ENCODE measurements at regions of chr19 and their contacts with region 1.

Region 1: GRCh38 chr19:3163230-3163886 is 15.2 kb upstream of the S1PR4 start:
- DNase-seq: peak; percentile 53 to 64
- H3K4me3 ChIP-seq: no peak overlapping the region
- H3K27ac ChIP-seq: no peak overlapping the region
- H3K4me1 ChIP-seq: peaks cover 7 to 19% of the 10 kb centered on the region in 2 donors
- H3K27me3 ChIP-seq: no peaks in the 10 kb centered on the region
- CTCF ChIP-seq: peak; percentile 77 to 97 (median 86)
- POLR2A ChIP-seq: no peak

Region 2: DNA sequence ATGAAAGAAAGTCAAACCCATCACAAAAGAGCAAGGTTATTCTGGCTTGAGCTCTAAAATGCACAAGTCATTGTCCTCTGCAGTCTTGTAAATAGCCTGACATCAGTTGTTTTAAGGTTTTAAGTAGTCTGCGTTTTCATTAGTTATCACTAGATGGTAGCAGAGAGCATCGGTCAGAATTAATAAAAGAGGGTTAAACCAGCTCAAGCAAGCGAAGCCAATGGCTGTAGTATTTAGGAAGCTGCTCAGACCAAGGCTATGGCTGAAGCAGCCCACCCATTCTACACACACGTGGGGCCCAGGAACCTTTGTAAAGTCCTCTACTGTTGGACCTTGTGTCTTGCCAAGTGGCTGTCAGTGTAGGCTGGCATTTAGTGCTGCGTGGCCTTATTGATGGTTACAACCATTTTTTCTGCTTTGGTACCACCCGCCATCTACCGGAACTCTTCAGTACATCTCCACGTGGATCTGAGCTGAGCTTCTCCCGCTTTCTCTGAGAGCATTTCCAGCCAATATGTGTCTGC is 275.9 kb before region 1 on chr19:
- intact Hi-C with region 1: loop called (anchors 5 kb)
- DNase-seq: no peak
- H3K4me3 ChIP-seq: no peak overlapping the region
- H3K27ac ChIP-seq: no peak overlapping the region
- H3K4me1 ChIP-seq: no peaks in the 10 kb centered on the region
- H3K27me3 ChIP-seq: no peaks in the 10 kb centered on the region
- CTCF ChIP-seq: peak; percentile 26 to 70 (median 57)
- POLR2A ChIP-seq: no peak

Region 3: DNA sequence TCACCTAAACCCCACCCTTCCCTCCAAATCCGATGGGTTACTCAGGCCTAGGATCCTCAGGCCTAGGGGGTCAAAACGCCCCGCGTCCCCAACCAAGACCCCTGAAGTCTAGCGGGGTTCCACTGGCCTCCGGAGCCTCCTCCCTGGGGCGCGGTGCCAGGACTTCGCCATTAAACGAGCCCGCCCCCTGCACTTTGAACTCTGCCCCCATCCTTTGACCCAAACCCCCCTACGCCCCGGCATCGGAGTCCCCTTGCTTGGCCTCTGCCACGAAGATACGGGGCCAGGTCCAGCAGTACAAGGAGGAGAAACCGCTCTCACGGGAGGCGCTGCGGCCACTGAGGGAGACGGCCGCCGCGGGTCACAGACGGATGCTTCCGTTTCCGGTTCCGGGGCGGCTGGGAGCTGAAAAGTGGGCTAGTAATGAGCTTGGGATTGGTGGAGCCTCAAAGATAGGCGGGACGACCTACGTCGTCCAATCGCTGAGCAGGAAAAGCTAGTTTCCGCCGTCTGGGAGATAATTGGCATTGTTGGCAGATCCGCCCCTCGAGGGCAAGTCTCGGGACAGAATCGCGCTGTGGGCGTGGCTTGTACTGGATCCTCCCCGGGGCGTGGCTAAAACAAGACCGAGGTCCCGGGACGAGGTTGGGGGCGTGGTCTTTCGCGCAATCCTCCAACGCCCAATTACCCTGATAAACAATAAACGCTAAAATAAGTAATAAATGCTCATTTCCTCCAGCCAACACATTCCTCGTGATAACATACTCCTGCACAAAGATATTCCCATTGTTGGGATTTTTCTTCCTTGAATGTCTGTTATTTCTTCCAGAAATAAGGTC is 212.9 kb before region 1 on chr19:
- intact Hi-C with region 1: loop called (anchors 10 kb)
- DNase-seq: peak; percentile 100
- H3K4me3 ChIP-seq: peak overlapping the region; percentile 19 to 68 (median 62)
- H3K27ac ChIP-seq: peak overlapping the region; percentile 83 to 98 (median 94)
- H3K4me1 ChIP-seq: peaks cover 22 to 35% of the 10 kb centered on the region in 2 donors
- H3K27me3 ChIP-seq: no peaks in the 10 kb centered on the region
- CTCF ChIP-seq: no peak
- POLR2A ChIP-seq: peak; percentile 66 to 88

Region 4: GRCh38 chr19:3020321-3020960 is 142.9 kb before region 1 on chr19:
- intact Hi-C with region 1: no loop called
- DNase-seq: no peak
- H3K4me3 ChIP-seq: no peak overlapping the region
- H3K27ac ChIP-seq: no peak overlapping the region
- H3K4me1 ChIP-seq: no peaks in the 10 kb centered on the region
- H3K27me3 ChIP-seq: no peaks in the 10 kb centered on the region
- CTCF ChIP-seq: no peak
- POLR2A ChIP-seq: no peak

Region 5: DNA sequence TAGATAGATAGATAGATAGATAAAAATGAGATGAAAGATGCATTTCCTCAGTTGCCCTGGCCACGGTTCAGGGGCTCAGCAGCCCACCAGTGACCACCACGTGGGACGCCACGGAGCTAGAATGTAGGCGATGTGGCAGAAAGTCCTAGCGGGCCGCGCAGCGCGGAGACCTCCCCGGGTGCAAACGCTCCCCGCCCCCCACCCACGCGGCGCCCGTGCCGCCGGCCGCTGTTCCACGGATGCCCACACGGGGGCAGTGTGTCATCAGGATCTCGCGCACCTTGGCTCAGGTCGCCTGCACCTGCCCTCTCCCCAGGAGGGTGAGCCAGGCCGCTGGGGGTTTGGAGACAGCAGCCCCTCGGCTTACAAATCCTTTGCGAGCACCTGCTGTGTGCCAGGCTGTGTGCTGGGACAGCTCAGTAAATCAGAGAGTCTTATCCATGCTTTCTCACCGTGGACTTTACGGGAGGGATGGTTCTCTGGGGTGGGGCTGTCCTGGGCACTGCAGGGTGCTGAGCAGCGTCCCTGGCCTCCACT is 87.4 kb before region 1 on chr19:
- intact Hi-C with region 1: loop called (anchors 10 kb)
- DNase-seq: peak; percentile 59 to 66
- H3K4me3 ChIP-seq: no peak overlapping the region
- H3K27ac ChIP-seq: peak overlapping the region in 1 of 3 donors; percentile 34
- H3K4me1 ChIP-seq: peaks cover 11 to 30% of the 10 kb centered on the region in 2 donors
- H3K27me3 ChIP-seq: no peaks in the 10 kb centered on the region
- CTCF ChIP-seq: peak; percentile 73 to 97 (median 92)
- POLR2A ChIP-seq: no peak

Region 6: DNA sequence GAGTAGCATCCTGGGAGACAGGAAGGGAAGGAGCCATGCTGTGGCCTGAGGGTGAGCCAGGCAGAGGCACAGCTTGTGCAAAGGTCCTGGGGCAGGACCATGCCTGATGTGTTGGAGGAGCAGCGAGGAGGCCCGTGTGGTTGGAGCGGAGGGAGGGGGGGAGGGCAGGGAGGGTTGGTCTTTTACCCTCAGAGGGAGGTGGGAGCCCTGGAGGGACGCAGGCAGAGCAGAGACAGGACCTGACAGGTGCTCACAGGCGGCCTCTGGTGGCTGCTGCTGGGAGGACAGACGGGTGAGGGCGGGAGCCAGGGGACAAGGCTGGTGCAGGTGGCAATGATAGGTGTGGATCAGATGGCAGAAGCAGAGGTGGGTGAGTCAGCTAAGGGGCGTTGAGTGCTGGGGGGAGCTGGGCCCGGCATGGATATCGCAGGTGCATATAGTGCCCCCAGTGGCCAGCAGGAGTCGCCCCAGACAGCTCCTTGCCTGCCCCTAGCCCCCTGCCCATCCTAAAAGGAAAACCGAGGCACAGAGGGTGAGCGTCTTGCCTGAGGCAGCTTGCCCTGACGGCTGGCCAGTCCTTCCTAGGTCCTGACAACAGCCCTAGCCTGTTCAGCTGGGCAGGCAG is 37.3 kb before region 1 on chr19:
- intact Hi-C with region 1: loop called (anchors 5 kb)
- DNase-seq: peak; percentile 38 to 68
- H3K4me3 ChIP-seq: no peak overlapping the region
- H3K27ac ChIP-seq: no peak overlapping the region
- H3K4me1 ChIP-seq: no peaks in the 10 kb centered on the region
- H3K27me3 ChIP-seq: no peaks in the 10 kb centered on the region
- CTCF ChIP-seq: peak; percentile 25 to 76 (median 68)
- POLR2A ChIP-seq: no peak

Measured in thyroid gland (tissue), 4 donors.